ENCODE measurements at regions of chr15 and their contacts with region 1.

Region 1: GRCh38 chr15:78481917-78482316 is 25.5 kb upstream of the HYKK start:
- DNase-seq: no peak

Region 2: DNA sequence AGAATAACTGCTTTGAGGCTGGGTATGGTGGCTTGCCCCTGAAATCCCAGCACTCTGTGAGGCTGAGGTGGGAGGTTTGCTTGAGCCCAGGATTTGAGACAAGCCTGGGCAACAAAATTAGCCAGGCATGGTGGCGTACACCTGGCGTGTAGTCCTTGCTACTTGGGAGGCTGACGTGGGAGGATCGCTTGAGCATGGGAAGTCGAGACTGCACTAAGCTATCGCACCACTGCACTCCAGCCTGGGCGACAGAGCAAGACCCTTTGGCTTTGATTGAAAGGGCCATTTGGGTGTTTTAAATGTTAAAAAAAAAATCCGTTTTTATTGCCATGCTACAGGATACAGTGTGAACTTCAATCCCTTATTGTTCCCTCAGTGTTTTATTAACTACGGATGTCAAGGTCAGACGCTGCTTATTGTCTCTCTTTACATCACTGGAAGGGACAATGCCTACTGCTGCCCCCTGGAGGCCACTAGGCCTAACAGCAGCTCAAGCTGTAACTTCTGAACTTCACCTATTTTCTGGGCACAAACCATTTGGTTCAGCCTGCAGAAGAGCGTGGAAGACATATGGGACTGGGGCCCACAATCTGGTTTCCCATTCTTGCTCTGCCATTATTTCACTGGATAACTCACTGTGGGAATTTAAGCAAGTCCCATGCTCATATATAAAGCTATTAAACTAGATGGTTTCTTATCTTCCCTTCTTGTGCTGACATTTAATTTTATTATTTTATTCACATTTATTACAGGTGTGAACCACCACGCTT is 59.2 kb before region 1 on chr15:
- intact Hi-C with region 1: loop called (anchors 10 kb)
- DNase-seq: peak in 41 of 42 donors; percentile 54 to 91 (median 75)